Astrocyte of the cerebellum (primary cell): ENCODE measurements at regions of chr17 and their contacts with region 1.

Region 1: GRCh38 chr17:74478420-74479100 is 12.1 kb downstream of the CD300A start:
- DNase-seq: no peak
- H3K4me3 ChIP-seq: no peak overlapping the region
- CTCF ChIP-seq: no peak

Region 2: DNA sequence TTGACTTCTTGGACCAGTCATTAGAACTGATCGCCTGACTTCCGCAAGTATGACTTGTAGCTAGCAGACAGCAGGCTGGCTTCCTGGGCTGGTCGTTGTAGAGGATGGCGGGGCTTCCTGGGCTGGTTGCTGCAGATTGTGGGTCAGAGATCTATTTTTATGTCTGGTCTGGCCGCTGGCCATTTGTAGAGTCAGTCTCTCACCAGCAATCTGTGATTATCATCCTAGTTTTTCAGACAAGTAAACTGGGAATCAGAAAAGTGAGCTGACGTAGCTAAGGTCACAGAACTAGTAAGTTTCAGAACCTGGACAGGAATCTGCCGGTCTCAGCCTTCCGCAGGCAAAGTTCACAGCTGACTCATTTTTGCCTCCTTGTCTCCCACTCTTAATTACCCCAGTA is 92.2 kb before region 1 on chr17:
- in situ Hi-C with region 1: loop called (anchors 5 kb)
- DNase-seq: no peak
- H3K4me3 ChIP-seq: no peak overlapping the region
- CTCF ChIP-seq: no peak

Region 3: GRCh38 chr17:74437702-74438101 is 40.9 kb before region 1 on chr17:
- in situ Hi-C with region 1: loop called (anchors 5 kb)
- DNase-seq: no peak
- H3K4me3 ChIP-seq: no peak overlapping the region
- CTCF ChIP-seq: peak; percentile 52